ENCODE measurements at regions of chrX and their contacts with region 1.

Region 1: GRCh38 chrX:150693775-150694574 is 779 bp downstream of the MTMR1 start:
- DNase-seq: peak; percentile 65
- ATAC-seq: peak; percentile 56
- H3K4me3 Mint-ChIP-seq: peak overlapping the region; percentile 88
- H3K27ac Mint-ChIP-seq: peak overlapping the region; percentile 98
- H3K4me1 Mint-ChIP-seq: peaks cover 61% of the 10 kb centered on the region
- H3K27me3 Mint-ChIP-seq: no peaks in the 10 kb centered on the region
- CTCF ChIP-seq: no peak

Region 2: DNA sequence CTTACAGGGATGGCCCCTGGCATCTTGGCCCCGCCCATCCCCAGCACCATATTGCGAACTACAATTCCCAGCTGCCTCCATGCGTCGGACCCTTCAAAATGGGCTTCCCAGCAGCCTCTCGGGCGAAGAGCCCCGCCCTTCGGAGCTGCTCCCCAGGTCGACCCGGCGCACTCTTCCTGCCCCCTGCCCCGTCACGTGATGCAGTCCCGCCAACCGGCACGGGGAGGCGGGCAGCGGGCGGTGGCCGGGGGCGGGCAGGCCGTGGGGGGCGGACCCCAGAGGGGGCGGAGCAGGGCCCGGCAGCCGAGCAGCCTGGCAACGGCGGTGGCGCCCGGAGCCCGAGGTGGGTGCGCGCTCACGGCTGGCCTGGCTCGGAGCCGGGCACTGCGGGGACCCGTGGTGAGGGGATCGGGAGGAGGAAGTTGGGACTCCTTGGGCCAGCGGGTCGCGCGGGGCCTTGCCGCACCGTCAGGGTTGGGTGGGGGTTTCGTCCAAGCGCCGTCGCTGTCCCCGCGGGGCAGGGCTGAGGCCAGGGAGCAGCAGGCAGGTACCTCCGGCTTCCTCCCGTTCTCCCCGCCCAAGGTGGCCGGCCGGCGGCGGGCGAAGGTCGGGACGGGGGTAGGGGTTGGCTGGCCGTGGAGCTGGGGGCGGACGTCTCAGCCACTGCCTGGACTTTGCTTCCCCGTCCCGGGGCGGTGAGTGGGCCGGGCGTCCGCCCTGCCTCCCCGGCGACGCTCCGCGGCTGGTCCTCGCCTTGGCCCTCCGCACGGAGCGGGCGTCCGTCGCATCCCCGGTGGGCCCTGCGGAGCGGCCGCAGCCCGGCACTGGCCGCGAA is 125.4 kb before region 1 on chrX and contains the start of gene MTM1:
- CTCF ChIA-PET with region 1: no interaction called
- POLR2A ChIA-PET with region 1: interaction called, 13 read pairs
- intact Hi-C with region 1: loop called (anchors 2 kb)
- DNase-seq: peak; percentile 86
- ATAC-seq: peak; percentile 86
- H3K4me3 Mint-ChIP-seq: peak within 1 kb of the TSS; percentile 86
- H3K27ac Mint-ChIP-seq: peak within 1 kb of the TSS; percentile 89
- H3K4me1 Mint-ChIP-seq: peaks cover 45% of the 10 kb centered on the region
- H3K27me3 Mint-ChIP-seq: no peaks in the 10 kb centered on the region
- CTCF ChIP-seq: no peak
- total RNA-seq, gene MTM1: 22.0 and 24.4 TPM in 2 replicates

Region 3: DNA sequence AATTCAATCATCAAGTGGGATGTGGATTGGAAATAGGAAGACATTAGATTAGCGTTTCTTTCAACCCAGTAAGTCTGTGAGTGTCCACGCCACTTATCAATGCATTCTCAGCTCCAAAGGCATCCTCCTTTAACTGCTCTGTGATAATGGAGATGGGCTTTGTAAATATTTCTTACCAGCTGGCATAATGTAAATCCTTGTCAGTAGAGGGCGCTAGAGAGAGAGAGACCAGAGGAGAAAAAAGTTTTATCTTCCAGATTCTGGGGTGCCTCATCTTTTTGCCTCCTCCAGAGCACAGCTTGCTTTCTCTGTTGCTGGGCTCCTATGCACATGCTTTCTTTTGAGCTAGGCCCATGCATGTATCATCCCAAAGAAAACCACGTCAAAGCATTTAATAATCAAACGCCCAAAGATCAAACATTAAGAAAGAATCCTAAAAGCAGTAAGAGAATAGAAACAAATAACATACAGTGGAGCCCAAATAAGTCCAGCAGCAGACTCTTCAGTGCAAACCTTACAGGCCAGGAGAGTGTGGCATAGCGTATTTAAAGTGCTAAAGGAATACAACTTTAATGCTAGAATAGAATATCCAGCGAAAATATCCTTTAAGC is 10.3 kb before region 1 on chrX:
- CTCF ChIA-PET with region 1: interaction called, 18 read pairs
- POLR2A ChIA-PET with region 1: interaction called, 8 read pairs
- intact Hi-C with region 1: loop called (anchors 2 kb)
- DNase-seq: no peak
- ATAC-seq: peak; percentile 18
- H3K4me3 Mint-ChIP-seq: no peak overlapping the region
- H3K27ac Mint-ChIP-seq: no peak overlapping the region
- H3K4me1 Mint-ChIP-seq: peaks cover 7% of the 10 kb centered on the region
- H3K27me3 Mint-ChIP-seq: no peaks in the 10 kb centered on the region
- CTCF ChIP-seq: no peak

Region 4: DNA sequence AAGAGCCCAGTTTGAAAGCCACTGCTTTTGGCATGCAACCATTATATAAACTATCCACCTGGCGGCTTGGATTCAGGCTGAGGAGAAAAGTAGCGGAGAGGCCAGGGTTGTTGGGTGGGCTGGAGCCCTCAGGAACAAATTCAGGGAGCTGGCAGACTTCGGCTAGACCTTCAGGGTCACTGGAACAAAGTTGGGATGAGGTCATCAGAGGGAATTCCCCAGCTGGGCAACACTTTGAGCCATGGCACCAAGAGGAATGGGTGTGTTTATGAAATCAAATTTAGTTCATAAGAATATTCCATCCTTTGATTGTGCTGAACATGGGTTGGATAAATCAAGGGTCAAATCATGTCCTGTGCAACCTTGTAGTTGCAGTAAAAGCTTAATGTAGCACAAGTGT is 21.2 kb after region 1 on chrX:
- CTCF ChIA-PET with region 1: interaction called, 4 read pairs
- POLR2A ChIA-PET with region 1: interaction called, 20 read pairs
- intact Hi-C with region 1: loop called (anchors 1 kb)
- DNase-seq: no peak
- ATAC-seq: no peak
- H3K4me3 Mint-ChIP-seq: no peak overlapping the region
- H3K27ac Mint-ChIP-seq: peak overlapping the region; percentile 35
- H3K4me1 Mint-ChIP-seq: peaks cover 42% of the 10 kb centered on the region
- H3K27me3 Mint-ChIP-seq: no peaks in the 10 kb centered on the region
- CTCF ChIP-seq: no peak

Region 5: GRCh38 chrX:150736475-150736874 is 42.5 kb after region 1 on chrX:
- CTCF ChIA-PET with region 1: no interaction called
- POLR2A ChIA-PET with region 1: no interaction called
- intact Hi-C with region 1: no loop called
- DNase-seq: no peak
- ATAC-seq: peak; percentile 74
- H3K4me3 Mint-ChIP-seq: peak overlapping the region; percentile 44
- H3K27ac Mint-ChIP-seq: peak overlapping the region; percentile 84
- H3K4me1 Mint-ChIP-seq: peaks cover 25% of the 10 kb centered on the region
- H3K27me3 Mint-ChIP-seq: no peaks in the 10 kb centered on the region
- CTCF ChIP-seq: no peak

Measured in activated B cell treated with CpG ODN at 0.5 μM for 24 hours (primary cell).